ENCODE measurements at regions of chrX and their contacts with region 1.

Region 1: DNA sequence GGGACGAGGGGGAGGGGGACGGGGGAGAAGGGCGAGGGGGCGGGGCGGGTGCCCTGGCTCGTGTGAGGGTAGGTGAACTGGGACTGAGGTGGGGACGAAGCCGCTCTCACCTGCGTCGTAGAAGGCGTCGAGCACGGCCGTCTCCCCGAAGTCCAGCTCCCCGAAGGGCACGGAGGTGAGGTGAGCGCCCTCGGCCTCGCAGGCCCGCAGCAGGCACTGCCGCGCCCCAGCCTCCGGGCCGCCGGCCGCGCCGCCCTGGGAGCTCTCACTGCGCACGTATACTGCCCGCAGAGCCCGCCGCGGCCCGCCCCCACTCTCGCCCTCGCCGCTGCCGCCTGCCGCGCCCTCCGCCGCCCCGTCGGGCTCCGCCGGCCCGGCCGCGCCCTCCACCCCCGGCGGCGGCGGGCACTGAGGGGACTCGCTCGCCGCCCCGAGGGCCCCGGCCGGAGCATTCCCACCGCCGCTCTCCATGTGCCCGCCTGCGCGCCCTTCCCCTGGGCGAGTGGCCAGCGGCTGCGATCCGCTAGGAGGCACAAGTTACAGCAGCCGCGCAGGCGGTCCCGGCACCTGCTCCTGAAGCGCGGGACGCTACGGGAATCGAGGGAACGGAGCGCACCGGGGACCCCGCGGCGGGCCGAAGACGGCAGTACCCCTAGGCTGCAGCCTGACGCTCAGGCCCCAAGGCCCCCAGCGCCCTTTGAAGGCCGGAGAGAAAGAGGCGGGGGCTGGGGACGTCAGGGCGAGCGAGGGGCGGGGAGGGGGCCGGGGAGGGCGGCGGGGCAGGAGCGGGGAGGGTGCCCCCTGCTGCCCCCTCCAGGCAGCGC is at the start of gene MAP3K15:
- DNase-seq: peak; percentile 69
- H3K4me3 Mint-ChIP-seq: peak within 1 kb of the TSS; percentile 80
- H3K27ac Mint-ChIP-seq: no peak within 1 kb of the TSS
- H3K4me1 Mint-ChIP-seq: no peaks in the 10 kb centered on the region
- H3K27me3 Mint-ChIP-seq: peaks cover 21% of the 10 kb centered on the region
- CTCF ChIP-seq: no peak
- total RNA-seq, gene MAP3K15: 4.7 and 4.8 TPM in 2 replicates

Region 2: DNA sequence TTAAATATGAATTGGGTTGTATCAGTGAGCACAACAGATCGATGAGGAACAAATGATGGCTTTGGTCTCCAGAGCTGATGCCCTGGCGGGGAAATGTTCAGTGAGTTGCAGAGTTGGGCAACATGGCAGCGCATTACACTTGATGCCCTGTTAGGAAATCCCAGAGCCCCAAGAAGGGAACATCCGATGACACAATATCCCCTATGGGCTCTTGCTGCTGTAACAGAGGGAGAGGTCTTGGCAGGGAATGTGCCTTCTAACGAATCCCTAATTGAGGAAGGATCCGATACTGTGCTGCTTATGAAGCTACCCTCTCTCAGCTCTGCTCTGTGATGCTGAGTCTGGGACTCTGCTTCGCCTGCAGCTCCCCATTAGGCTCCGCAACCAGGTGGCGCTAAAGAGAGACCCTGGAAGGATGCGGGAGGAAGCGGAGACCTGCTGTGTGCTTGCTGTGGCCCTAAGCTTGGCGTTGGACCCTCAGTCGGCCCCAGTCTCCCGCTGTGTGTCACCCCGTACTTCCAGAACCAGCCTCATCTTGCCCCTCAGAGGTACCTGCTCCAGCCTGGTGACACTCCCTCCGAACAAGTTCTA is 132.4 kb before region 1 on chrX:
- CTCF ChIA-PET with region 1: interaction called, 8 read pairs
- intact Hi-C with region 1: loop called (anchors 5 kb)
- DNase-seq: peak; percentile 75
- H3K4me3 Mint-ChIP-seq: no peak overlapping the region
- H3K27ac Mint-ChIP-seq: no peak overlapping the region
- H3K4me1 Mint-ChIP-seq: no peaks in the 10 kb centered on the region
- H3K27me3 Mint-ChIP-seq: no peaks in the 10 kb centered on the region
- CTCF ChIP-seq: peak; percentile 53

Region 3: GRCh38 chrX:19487520-19488200 is 27.3 kb before region 1 on chrX:
- CTCF ChIA-PET with region 1: no interaction called
- intact Hi-C with region 1: no loop called
- DNase-seq: peak; percentile 44
- H3K4me3 Mint-ChIP-seq: peak overlapping the region; percentile 24
- H3K27ac Mint-ChIP-seq: no peak overlapping the region
- H3K4me1 Mint-ChIP-seq: peaks cover 8% of the 10 kb centered on the region
- H3K27me3 Mint-ChIP-seq: no peaks in the 10 kb centered on the region
- CTCF ChIP-seq: no peak